Activated CD4-positive, alpha-beta memory T cell treated with anti-CD3 and anti-CD28 coated beads for 36 hours (primary cell): ENCODE measurements at regions of chr22 and their contacts with region 1.

Region 1: DNA sequence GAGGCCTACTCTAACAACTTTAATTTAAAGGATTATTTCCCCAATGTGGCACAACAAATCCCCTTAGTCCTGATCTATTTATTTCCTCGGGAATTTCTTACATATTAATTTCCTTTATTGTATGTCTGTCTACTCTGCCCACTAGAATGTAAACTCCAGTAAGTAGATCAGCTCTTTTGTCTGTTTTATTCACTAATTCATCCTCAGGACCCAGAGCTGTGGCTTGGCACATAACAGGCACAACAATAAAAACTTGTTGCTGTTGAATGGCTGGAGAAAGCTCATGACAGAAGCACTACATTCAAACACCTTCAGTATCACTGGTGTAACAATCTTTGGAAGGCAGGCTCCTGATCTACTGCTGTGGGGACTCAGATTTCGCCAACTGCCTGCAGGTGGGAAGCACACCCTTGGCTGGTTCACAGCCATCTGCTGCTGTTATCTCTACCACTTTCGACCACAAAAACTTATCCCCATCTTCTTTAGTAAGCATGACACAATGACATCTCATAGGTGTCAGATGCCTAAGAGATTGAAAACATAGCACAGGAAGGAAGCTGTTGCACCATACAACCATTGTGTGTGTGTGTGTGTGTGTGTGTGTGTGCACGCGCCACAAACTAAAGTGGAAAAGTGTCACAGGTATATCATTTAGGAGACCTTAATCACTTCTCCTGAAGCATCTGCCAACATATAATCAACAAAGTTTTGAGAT is 11.9 kb downstream of the HIRA start:
- DNase-seq: peak; percentile 73
- H3K4me3 Mint-ChIP-seq: no peak overlapping the region
- H3K27ac Mint-ChIP-seq: peak overlapping the region; percentile 63
- H3K4me1 Mint-ChIP-seq: peaks cover 55% of the 10 kb centered on the region
- H3K27me3 Mint-ChIP-seq: no peaks in the 10 kb centered on the region

Region 2: DNA sequence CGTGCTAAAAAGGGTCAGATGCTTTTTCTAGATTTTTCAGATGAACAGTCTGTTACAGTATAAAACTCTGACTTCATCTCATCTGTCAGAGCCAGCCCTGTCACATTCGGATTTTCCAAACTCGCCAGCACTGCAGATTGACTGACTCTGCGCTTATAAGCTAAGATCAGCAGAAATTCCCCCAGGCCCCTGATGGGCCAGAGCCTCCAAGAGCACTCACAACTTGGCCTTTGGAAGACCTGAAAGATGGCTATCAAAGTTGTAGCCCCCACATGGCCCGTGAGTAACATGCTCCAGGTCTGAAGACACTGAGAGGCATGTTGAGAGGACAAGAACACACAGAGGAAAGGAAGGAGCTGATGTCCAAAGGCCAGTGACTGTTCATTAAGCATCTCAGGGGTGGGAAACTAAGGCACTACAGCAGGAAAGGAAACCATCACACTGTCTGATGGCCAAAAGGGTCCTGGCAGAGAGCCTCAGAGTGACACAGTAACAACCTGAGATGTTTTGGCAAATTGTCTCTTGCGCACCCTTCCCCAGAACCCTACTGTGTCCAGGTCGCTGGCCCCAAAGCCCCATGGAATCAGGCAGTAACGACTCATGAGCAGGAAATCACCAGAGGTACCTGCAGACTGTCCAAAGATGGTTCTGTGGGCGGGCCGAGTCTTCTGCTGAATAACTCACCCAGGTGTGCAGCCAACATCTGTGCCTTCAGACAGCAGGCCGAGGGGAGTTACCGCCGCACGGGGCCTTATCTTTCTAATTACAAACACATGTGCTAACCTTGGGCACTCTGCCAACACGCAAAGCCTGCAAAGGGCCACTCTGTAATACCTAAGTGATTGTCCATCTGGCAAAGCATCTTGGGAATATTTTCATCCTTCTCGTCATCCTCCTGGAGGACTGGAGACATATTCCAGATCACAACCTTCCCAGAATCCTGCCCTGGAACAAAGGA is 11.7 kb before region 1 on chr22:
- CTCF ChIA-PET with region 1: no interaction called
- POLR2A ChIA-PET with region 1: no interaction called
- intact Hi-C with region 1: no loop called
- DNase-seq: no peak
- H3K4me3 Mint-ChIP-seq: no peak overlapping the region
- H3K27ac Mint-ChIP-seq: no peak overlapping the region
- H3K4me1 Mint-ChIP-seq: peaks cover 6% of the 10 kb centered on the region
- H3K27me3 Mint-ChIP-seq: no peaks in the 10 kb centered on the region

Region 3: DNA sequence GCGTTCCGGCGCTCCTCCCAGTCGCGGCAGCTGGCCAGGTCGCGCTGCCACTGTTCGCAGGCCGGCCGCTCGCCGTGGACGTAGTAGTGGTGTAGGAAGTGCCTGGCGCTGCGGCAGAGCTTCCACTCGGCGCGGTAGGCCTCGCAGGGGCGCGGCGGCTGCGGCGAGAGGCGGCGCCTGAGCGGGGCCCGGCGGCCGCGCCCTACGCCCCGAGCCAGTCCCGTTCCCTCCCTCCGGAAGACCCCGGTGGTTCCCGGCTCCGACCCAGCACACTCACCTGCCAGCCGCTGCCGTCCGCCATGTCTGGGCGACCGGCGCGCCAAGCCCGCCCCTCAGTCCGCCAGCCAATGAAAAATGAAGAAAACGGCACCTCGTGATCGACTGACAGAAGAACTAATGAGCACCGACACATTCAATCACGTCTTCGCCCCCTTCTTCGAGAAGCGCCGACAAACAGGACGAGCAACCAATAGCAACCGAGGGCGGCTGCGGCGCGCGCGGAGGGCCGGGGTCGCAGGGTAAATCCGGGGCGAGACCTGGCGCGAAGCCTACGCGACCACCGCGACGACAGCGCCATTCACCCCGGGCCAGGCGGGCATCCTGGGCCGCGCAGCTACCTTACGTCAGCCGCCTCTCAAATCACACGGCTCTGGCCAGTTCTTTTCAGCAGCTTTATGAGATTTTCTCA is 27.9 kb after region 1 on chr22 and contains the start of gene C22orf39:
- CTCF ChIA-PET with region 1: interaction called, 3 read pairs
- POLR2A ChIA-PET with region 1: interaction called, 4 read pairs
- intact Hi-C with region 1: loop called (anchors 1 kb)
- DNase-seq: peak; percentile 93
- H3K4me3 Mint-ChIP-seq: peak within 1 kb of the TSS; percentile 94
- H3K27ac Mint-ChIP-seq: peak within 1 kb of the TSS; percentile 91
- H3K4me1 Mint-ChIP-seq: peaks cover 47% of the 10 kb centered on the region
- H3K27me3 Mint-ChIP-seq: no peaks in the 10 kb centered on the region
- total RNA-seq, gene C22orf39: 23.3 to 23.5 TPM